MCF 10A (cell line): ENCODE measurements at regions of chr12 and their contacts with region 1.

Region 1: DNA sequence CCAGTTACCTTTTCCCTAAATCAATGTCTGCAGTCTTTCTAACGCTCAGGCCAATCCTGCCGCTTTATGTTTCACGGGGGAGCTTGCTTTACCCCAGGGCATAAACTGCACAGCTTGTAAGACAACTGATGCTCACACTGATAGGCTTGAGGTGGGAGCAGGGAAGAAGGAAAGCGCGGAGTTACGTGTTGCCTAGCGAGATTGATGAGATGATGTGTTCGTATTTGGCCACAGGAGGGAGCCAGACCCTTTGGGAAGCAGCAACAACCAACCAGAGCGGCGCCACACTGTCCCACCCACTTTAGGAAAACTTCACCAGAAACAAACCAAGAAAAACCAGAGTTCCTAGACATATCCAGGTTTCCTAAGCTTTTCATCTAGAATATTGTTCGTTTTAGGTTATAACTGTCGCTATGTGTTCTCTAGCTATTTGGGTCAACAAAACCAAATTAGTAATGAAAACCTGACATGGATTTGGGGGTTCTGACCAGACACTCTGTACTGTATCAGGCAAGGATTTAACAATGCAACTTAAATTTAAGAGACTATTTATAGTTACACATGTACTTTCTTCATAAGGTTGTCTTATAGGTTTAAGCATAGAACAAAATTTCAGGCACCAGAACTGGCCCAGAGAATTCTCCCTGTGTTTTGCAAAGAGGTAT is 2.4 kb downstream of the IL26 start:
- DNase-seq: peak; percentile 88
- H3K4me3 Mint-ChIP-seq: no peak overlapping the region
- H3K27ac Mint-ChIP-seq: no peak overlapping the region
- H3K4me1 Mint-ChIP-seq: peaks cover 20% of the 10 kb centered on the region
- H3K27me3 Mint-ChIP-seq: peaks cover 12% of the 10 kb centered on the region
- CTCF ChIP-seq: peak; percentile 87

Region 2: GRCh38 chr12:68236421-68237059 is 13.3 kb after region 1 on chr12:
- CTCF ChIA-PET with region 1: interaction called, 31 read pairs
- POLR2A ChIA-PET with region 1: interaction called, 3 read pairs
- intact Hi-C with region 1: no loop called
- DNase-seq: peak; percentile 48
- H3K4me3 Mint-ChIP-seq: peak overlapping the region; percentile 61
- H3K27ac Mint-ChIP-seq: peak overlapping the region; percentile 50
- H3K4me1 Mint-ChIP-seq: peaks cover 26% of the 10 kb centered on the region
- H3K27me3 Mint-ChIP-seq: no peaks in the 10 kb centered on the region
- CTCF ChIP-seq: no peak

Region 3: GRCh38 chr12:68267892-68268396 is 44.7 kb after region 1 on chr12:
- CTCF ChIA-PET with region 1: interaction called, 6 read pairs
- POLR2A ChIA-PET with region 1: no interaction called
- intact Hi-C with region 1: loop called (anchors 5 kb)
- DNase-seq: peak; percentile 77
- H3K4me3 Mint-ChIP-seq: no peak overlapping the region
- H3K27ac Mint-ChIP-seq: peak overlapping the region; percentile 92
- H3K4me1 Mint-ChIP-seq: peaks cover 36% of the 10 kb centered on the region
- H3K27me3 Mint-ChIP-seq: no peaks in the 10 kb centered on the region
- CTCF ChIP-seq: no peak

Region 4: DNA sequence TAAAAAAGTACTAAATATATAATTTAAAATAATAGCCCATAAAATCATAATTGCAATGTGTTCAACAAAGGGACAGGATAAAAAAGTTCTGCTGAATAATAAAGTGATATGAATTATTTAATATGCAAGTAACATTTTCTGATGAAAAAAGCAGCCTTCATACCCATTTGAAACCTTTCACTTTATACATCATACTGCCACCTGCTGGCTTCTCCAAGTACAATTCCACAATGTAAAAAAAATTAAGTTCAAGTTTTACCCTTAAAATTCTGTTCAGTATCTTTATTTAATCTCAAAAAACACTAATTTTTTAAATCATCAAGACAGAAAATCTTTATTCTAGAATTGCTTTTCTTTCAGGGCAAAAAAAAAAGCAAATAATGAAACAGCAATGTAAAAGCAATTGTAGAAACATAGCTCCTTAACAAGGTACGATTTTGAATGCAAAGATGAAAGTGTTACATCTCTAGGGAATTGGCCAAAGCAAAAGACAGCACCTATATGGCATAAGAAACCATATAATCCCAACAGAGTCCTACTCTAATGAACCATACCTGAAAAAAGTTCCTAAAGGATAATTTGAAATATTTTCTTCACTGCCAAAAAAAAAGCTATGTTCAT is 93.9 kb after region 1 on chr12:
- CTCF ChIA-PET with region 1: interaction called, 151 read pairs
- POLR2A ChIA-PET with region 1: interaction called, 24 read pairs
- intact Hi-C with region 1: loop called (anchors 1 kb)
- DNase-seq: peak; percentile 53
- H3K4me3 Mint-ChIP-seq: no peak overlapping the region
- H3K27ac Mint-ChIP-seq: no peak overlapping the region
- H3K4me1 Mint-ChIP-seq: no peaks in the 10 kb centered on the region
- H3K27me3 Mint-ChIP-seq: no peaks in the 10 kb centered on the region
- CTCF ChIP-seq: peak; percentile 62

Region 5: GRCh38 chr12:68665016-68665569 is 441.9 kb after region 1 on chr12:
- CTCF ChIA-PET with region 1: no interaction called
- POLR2A ChIA-PET with region 1: no interaction called
- intact Hi-C with region 1: loop called (anchors 5 kb)
- DNase-seq: no peak
- H3K4me3 Mint-ChIP-seq: no peak overlapping the region
- H3K27ac Mint-ChIP-seq: no peak overlapping the region
- H3K4me1 Mint-ChIP-seq: no peaks in the 10 kb centered on the region
- H3K27me3 Mint-ChIP-seq: no peaks in the 10 kb centered on the region
- CTCF ChIP-seq: no peak